Cardiac septum (tissue), 1 donor: ENCODE measurements at regions of chr15 and their contacts with region 1.

Region 1: DNA sequence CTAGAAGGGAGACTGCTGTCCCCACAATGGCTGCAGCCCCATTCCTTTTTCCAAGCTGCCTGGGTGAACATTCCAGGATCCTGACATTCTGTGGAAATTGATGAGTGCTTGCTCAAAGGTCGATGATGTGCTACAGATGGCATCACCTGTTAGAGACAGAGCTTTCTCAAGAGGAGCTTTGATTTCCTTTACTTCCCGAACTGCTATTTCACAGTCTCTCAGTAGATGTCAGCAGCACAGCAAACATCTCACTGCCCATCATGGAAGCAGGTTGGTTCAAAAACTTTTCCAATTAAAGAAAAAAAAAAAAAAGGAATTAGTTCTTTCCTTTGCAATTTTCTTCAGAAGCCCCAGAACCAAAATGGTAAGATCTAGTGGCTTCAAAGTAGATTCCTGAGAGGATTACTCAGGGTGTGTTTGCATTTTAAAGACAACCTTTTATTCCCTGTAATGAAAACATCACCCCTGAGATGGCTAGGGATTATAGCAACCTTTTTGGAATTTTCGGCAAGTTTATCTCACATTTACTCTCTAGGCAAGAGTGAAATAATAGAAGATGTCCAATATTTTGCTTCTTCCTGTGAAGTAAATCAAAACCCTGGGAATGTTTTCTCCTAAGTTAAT is 44.8 kb downstream of the POLR2M start:
- DNase-seq: no peak

Region 2: DNA sequence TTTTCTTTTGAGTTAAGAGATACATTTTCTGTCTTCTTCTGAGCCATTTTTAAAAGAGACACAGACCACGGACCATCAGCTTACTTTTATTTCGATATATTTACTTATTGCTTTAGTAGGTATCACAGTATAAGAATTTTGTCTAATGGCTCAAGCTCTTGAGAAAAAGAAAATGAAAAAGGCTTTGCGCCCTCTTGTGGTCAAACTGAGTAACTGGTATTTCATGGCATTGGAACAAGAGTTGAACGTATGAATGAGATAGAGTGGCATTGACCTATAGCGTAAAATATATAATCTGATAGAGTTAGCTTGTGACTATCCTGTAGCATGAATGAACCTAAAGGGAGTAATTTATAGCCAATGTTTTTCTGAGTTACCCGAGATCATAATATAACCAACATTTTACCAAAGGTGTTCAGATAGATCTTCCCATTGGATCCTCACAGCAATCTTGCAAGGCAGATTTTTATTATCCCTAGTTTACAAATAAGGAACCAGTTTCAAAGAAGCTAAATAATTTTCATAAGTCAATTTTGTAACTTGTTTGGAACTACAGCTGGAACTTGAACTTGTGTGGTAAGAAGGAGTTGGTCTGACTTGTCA is 109.8 kb after region 1 on chr15:
- intact Hi-C with region 1: loop called (anchors 5 kb)
- DNase-seq: no peak

Region 3: DNA sequence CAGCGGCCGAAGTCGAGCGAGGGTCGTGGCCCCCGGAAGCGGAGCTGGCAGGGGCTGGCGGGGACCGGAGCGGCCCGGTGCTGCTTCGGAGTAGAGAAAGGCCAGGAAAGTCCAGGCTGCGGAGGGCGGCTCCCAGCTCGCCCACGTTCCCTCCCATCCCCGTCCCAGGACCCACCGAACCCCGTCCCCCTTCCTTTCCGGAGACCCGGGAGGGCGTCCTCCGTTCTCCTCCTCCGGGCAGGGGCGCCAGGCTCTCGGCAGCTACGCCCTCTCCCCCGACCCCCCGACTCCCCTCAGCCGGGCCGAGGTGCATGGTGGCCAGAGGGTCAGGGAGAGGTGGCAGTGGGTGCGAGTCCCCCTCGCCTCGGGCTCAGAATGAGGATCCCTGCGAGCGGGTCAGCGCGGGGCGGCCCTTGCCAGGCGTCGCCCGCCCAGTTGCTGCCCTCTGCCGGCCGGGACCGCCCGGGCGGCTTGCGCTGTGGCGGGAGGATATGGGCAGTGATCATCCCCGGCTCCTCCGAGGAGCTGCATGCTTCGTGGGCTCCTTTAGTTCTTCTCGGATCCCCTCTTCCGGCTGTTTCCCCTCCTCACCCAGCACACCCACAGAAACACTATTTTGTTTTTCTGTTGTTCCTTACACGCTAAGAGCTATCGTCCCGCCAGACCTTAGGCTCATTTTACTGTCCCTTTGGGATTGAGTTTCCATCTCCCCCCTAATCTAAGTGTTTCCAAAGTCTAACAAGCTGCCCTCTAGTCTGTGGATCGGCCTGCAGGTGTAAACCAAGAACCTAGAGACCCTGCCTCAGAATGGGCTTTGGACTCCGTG is 315.0 kb after region 1 on chr15:
- intact Hi-C with region 1: loop called (anchors 2 kb)
- DNase-seq: peak; percentile 87

Region 4: GRCh38 chr15:58227706-58228543 is 476.6 kb after region 1 on chr15:
- intact Hi-C with region 1: no loop called
- DNase-seq: peak; percentile 86